ENCODE measurements at regions of chr14 and their contacts with region 1.

Region 1: DNA sequence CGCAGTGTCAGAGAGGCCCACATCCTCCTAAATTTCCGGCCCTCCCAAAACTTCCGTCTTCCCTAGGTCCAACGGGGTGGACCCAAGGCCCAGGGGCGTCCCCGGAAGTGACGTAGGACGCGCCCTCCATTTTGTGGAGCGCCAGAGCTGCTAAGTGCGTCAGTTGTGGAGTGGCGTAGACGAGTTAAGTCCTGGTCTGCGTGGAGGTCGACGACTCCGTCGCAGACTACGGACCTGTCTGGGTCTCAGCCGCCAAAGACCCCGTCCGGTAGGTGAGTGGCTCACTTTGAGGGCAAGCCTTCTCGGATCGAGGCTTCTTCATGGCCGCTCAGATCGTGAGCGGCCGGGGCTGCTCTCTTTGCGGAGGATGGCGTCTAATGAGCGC is at the start of gene SRSF5:
- DNase-seq: peak; percentile 88 to 95
- H3K4me3 ChIP-seq: peak within 1 kb of the TSS; percentile 95 to 100 (median 98)
- H3K27ac ChIP-seq: peak within 1 kb of the TSS; percentile 99
- H3K4me1 ChIP-seq: peaks cover 0 to 5% (median 3%) of the 10 kb centered on the region in 4 experiments; a peak in 5 of 7 replicates
- H3K27me3 ChIP-seq: no peaks in the 10 kb centered on the region
- CTCF ChIP-seq: no peak
- EP300 ChIP-seq: no peak
- POLR2A ChIP-seq: peak; percentile 99
- RAD21 ChIP-seq: no peak
- total RNA-seq, gene SRSF5: 226 and 238 TPM in 2 replicates

Region 2: GRCh38 chr14:69749956-69750355 is 17.0 kb before region 1 on chr14:
- CTCF ChIA-PET with region 1: no interaction called
- POLR2A ChIA-PET with region 1: interaction called, 39 read pairs
- DNase-seq: no peak
- H3K4me3 ChIP-seq: no peak overlapping the region
- H3K27ac ChIP-seq: no peak overlapping the region
- H3K4me1 ChIP-seq: 0 out of 7 replicates have a peak, but pooled peaks cover 0 to 2% (median 0%) of the 10 kb centered on the region in 4 experiments
- H3K27me3 ChIP-seq: no peaks in the 10 kb centered on the region
- CTCF ChIP-seq: no peak
- EP300 ChIP-seq: no peak
- POLR2A ChIP-seq: no peak
- RAD21 ChIP-seq: no peak

Region 3: DNA sequence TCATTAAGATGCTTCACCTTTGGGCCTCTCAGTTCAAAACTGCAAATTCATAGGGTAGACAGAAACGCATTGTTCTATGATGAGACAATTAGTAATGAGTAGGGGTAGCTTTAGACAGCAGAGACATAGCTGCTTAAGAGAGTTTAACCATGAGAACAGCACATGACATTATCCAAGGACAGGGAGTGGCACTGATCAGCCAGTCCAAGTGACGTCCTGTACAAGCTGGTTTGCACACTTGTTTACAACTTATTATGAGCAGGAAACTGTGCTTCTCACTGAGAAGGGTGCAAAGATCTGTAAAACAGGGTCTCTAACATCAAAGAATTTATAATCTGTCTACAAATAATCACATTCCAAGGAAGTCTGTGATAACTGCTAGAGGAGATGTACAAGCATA is 11.2 kb before region 1 on chr14:
- CTCF ChIA-PET with region 1: no interaction called
- POLR2A ChIA-PET with region 1: interaction called, 39 read pairs
- DNase-seq: no peak
- H3K4me3 ChIP-seq: no peak overlapping the region
- H3K27ac ChIP-seq: no peak overlapping the region
- H3K4me1 ChIP-seq: 0 out of 7 replicates have a peak, but pooled peaks cover 0 to 2% (median 0%) of the 10 kb centered on the region in 4 experiments
- H3K27me3 ChIP-seq: no peaks in the 10 kb centered on the region
- CTCF ChIP-seq: no peak
- EP300 ChIP-seq: no peak
- POLR2A ChIP-seq: no peak
- RAD21 ChIP-seq: no peak

Region 4: DNA sequence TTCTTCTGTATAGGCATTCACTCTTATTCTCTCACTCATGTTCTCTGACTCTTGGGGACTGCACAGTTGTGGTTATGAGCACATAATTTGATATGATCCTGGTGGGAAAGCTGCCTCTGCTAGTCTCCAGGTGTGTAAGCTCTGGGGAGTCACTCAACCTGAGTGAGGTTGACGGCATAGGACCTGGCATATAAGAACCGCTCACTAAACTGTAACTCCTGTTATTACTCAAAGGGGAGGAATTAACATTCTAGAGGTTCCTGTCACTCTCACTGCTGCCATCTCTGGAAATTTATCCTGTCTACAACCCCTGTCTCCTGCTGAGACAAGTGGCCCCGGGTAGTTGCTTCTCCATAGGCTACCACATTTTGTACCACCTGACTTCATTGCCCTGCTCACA is 14.0 kb after region 1 on chr14:
- CTCF ChIA-PET with region 1: no interaction called
- POLR2A ChIA-PET with region 1: interaction called, 30 read pairs
- DNase-seq: peak in 1 of 2 experiments; percentile 22
- H3K4me3 ChIP-seq: no peak overlapping the region
- H3K27ac ChIP-seq: no peak overlapping the region
- H3K4me1 ChIP-seq: no peaks in the 10 kb centered on the region
- H3K27me3 ChIP-seq: no peaks in the 10 kb centered on the region
- CTCF ChIP-seq: no peak
- EP300 ChIP-seq: no peak
- POLR2A ChIP-seq: no peak
- RAD21 ChIP-seq: no peak